SK-N-SH (cell line): ENCODE measurements at regions of chr2 and their contacts with region 1.

Region 1: GRCh38 chr2:42371611-42372473 is 10.8 kb upstream of the COX7A2L start:
- DNase-seq: peak; percentile 90
- H3K4me3 ChIP-seq: no peak overlapping the region
- H3K27ac ChIP-seq: peak overlapping the region in 1 of 2 experiments; percentile 99; a peak in 2 of 4 replicates
- H3K4me1 ChIP-seq: peaks cover 0 to 46% of the 10 kb centered on the region in 2 experiments; a peak in 2 of 4 replicates
- H3K27me3 ChIP-seq: 0 out of 2 replicates have a peak, but pooled peaks cover 4% of the 10 kb centered on the region
- CTCF ChIP-seq: no peak
- EP300 ChIP-seq: peak in 1 of 2 experiments; percentile 98; a peak in 2 of 4 replicates
- RAD21 ChIP-seq: peak; percentile 72

Region 2: GRCh38 chr2:42345986-42346385 is 25.9 kb before region 1 on chr2:
- CTCF ChIA-PET with region 1: no interaction called
- POLR2A ChIA-PET with region 1: no interaction called
- DNase-seq: no peak
- H3K4me3 ChIP-seq: no peak overlapping the region
- H3K27ac ChIP-seq: no peak overlapping the region; a peak in 1 of 4 replicates
- H3K4me1 ChIP-seq: peaks cover 16 to 17% of the 10 kb centered on the region in 2 experiments; a peak in 3 of 4 replicates
- H3K27me3 ChIP-seq: no peaks in the 10 kb centered on the region
- CTCF ChIP-seq: no peak
- EP300 ChIP-seq: no peak
- RAD21 ChIP-seq: no peak

Region 3: DNA sequence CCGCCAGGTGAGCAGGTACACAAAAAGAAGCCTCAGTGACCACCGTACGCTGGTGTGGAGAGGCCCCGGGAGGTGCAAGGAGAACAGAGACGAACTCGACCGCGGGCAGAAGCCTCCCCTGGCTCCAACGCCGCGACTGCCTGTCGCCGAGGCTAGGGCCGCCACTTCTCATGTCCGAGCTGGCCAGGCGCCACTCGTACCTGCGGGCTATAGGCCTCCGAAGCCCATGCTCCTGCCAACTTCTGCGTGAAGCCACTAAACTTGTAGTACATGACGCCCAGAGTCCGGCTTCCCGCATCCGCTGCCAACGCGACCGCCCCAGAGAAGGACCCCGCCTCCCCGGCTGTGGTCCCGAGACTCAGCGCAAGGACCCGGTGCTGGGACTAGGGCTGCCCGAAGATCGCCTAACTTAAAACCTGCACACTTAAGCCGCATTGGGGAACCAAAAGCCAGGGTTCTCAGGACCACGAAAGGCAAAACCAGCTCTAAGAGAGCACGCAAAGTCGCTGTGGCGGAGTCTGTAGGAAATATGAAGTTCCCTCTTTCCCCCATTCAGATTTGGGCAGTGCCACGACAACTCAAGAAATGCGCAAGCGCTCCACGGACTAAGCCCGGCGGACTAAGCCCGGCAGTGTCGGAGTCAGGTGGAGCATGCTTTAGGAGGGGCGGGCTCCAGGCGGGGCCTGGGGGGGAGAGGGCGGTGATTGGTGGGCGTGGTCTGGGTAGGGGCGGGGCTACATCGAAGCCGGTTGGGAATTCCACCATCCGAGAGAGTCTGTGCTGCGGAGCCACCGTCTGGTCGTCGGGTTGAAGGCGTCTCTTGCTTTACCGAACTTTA is 10.7 kb before region 1 on chr2 and contains the start of gene COX7A2L:
- CTCF ChIA-PET with region 1: interaction called, 11 read pairs
- POLR2A ChIA-PET with region 1: interaction called, 4 read pairs
- DNase-seq: peak; percentile 99
- H3K4me3 ChIP-seq: peak within 1 kb of the TSS; percentile 91 to 96
- H3K27ac ChIP-seq: peak within 1 kb of the TSS; percentile 92 to 98
- H3K4me1 ChIP-seq: peaks cover 3 to 16% of the 10 kb centered on the region in 2 experiments; a peak in 3 of 4 replicates
- H3K27me3 ChIP-seq: no peaks in the 10 kb centered on the region; the same call in 1 of the 2 replicates
- CTCF ChIP-seq: peak; percentile 50; the same call in 1 of the 2 replicates
- EP300 ChIP-seq: no peak
- RAD21 ChIP-seq: peak; percentile 81
- polyA plus RNA-seq, gene COX7A2L: 77.6 and 82.3 TPM in 2 replicates

Region 4: GRCh38 chr2:42386684-42387083 is 14.8 kb after region 1 on chr2:
- CTCF ChIA-PET with region 1: interaction called, 14 read pairs
- POLR2A ChIA-PET with region 1: interaction called, 6 read pairs
- DNase-seq: peak; percentile 43
- H3K4me3 ChIP-seq: no peak overlapping the region
- H3K27ac ChIP-seq: no peak overlapping the region
- H3K4me1 ChIP-seq: peaks cover 0 to 8% of the 10 kb centered on the region in 2 experiments; a peak in 2 of 4 replicates
- H3K27me3 ChIP-seq: no peaks in the 10 kb centered on the region; the same call in 1 of the 2 replicates
- CTCF ChIP-seq: peak; percentile 57
- EP300 ChIP-seq: no peak
- RAD21 ChIP-seq: no peak